ENCODE measurements at regions of chr12 and their contacts with region 1.

Region 1: DNA sequence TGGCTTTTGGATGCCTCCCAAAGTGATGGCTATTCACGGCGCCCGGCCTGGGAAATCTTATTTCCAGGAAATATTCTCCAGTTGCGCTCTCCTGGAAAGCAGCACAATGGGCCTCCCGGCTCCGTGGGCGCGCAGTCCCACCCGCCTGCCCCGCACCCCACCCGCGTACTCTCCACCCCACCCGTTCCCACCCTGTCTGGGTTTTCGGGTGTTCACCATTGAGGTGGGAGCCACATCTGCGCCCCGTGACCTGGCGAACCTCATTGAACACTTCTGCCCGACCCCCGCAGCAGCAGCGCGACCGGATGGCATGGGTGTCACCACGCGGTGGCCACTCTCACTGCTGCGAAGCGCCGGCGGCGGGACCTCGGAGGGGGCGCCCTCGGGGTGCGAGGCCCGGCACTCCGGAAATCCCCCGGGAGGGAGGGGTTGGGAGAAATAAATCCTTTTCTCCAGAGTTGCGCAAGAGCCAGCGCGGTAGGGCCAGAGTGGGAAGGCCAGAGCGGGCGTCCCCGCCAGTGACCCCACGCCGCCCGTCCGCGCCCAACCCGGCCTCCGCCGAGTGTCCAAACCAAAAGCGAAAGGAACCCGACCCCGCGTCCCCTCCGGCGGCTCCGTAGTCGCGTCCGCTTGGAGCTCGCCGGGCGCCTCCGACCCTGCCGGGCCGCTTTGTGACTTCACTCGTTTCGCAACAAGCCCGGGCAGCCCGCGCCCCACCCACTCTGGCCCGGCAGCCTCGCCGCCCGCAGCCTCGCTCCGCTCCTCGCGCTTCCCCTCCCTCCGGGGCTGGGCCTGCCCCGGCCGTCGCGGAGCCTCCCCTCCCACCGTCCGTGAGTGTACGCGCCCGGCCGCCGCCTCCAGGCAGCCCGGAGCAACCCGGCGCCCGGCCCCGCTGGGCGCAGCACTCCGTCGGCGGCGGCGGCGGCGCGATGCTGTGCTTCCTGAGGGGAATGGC is at the start of gene DRAM1:
- DNase-seq: no peak
- ATAC-seq: peak; percentile 87
- H3K4me3 ChIP-seq: peak within 1 kb of the TSS; percentile 89
- H3K27ac ChIP-seq: peak within 1 kb of the TSS; percentile 97
- H3K4me1 ChIP-seq: peaks cover 5% of the 10 kb centered on the region
- H3K27me3 ChIP-seq: no peaks in the 10 kb centered on the region
- CTCF ChIP-seq: peak; percentile 10 to 40 (median 36); a peak in 3 of 6 replicates
- EP300 ChIP-seq: no peak
- POLR2A ChIP-seq: peak; percentile 89
- RAD21 ChIP-seq: peak; percentile 43; the same call in 1 of the 2 replicates
- polyA plus RNA-seq, gene DRAM1: 22.4 to 34.8 TPM

Region 2: GRCh38 chr12:101857043-101857558 is 20.0 kb before region 1 on chr12:
- CTCF ChIA-PET with region 1: interaction called, 3 read pairs
- POLR2A ChIA-PET with region 1: interaction called, 7 read pairs
- RAD21 ChIA-PET with region 1: interaction called, 9 read pairs
- SMC1A ChIA-PET with region 1: interaction called, 11 read pairs
- in situ Hi-C with region 1: no loop called
- intact Hi-C with region 1: loop called (anchors 1 kb)
- DNase-seq: no peak
- ATAC-seq: peak; percentile 49
- H3K4me3 ChIP-seq: no peak overlapping the region
- H3K27ac ChIP-seq: peak overlapping the region; percentile 75
- H3K4me1 ChIP-seq: peaks cover 64% of the 10 kb centered on the region
- H3K27me3 ChIP-seq: no peaks in the 10 kb centered on the region
- CTCF ChIP-seq: no peak
- EP300 ChIP-seq: peak; percentile 40 to 64; a peak in 3 of 4 replicates
- POLR2A ChIP-seq: no peak
- RAD21 ChIP-seq: no peak

Region 3: GRCh38 chr12:101863981-101864380 is 13.2 kb before region 1 on chr12:
- CTCF ChIA-PET with region 1: interaction called, 6 read pairs
- POLR2A ChIA-PET with region 1: interaction called, 9 read pairs
- RAD21 ChIA-PET with region 1: interaction called, 8 read pairs
- SMC1A ChIA-PET with region 1: interaction called, 11 read pairs
- in situ Hi-C with region 1: no loop called
- intact Hi-C with region 1: loop called (anchors 1 kb)
- DNase-seq: no peak
- ATAC-seq: no peak
- H3K4me3 ChIP-seq: no peak overlapping the region
- H3K27ac ChIP-seq: no peak overlapping the region
- H3K4me1 ChIP-seq: peaks cover 13% of the 10 kb centered on the region
- H3K27me3 ChIP-seq: no peaks in the 10 kb centered on the region
- CTCF ChIP-seq: no peak
- EP300 ChIP-seq: no peak
- POLR2A ChIP-seq: no peak
- RAD21 ChIP-seq: no peak

Region 4: GRCh38 chr12:101891462-101892273 is 14.5 kb after region 1 on chr12:
- CTCF ChIA-PET with region 1: interaction called, 11 read pairs
- POLR2A ChIA-PET with region 1: interaction called, 15 read pairs
- RAD21 ChIA-PET with region 1: interaction called, 4 read pairs
- SMC1A ChIA-PET with region 1: interaction called, 16 read pairs
- in situ Hi-C with region 1: no loop called
- intact Hi-C with region 1: no loop called
- DNase-seq: peak; percentile 75
- ATAC-seq: peak; percentile 92
- H3K4me3 ChIP-seq: 0 out of 2 replicates have a peak overlapping the region, but pooled peaks have one; percentile 25
- H3K27ac ChIP-seq: peak overlapping the region; percentile 41
- H3K4me1 ChIP-seq: peaks cover 11% of the 10 kb centered on the region
- H3K27me3 ChIP-seq: no peaks in the 10 kb centered on the region
- CTCF ChIP-seq: no peak
- EP300 ChIP-seq: no peak
- POLR2A ChIP-seq: peak; percentile 40; the same call in 1 of the 2 replicates
- RAD21 ChIP-seq: no peak

Region 5: GRCh38 chr12:101909646-101910045 is 32.5 kb after region 1 on chr12:
- CTCF ChIA-PET with region 1: interaction called, 3 read pairs
- POLR2A ChIA-PET with region 1: interaction called, 3 read pairs
- RAD21 ChIA-PET with region 1: interaction called, 7 read pairs
- SMC1A ChIA-PET with region 1: interaction called, 10 read pairs
- in situ Hi-C with region 1: no loop called
- intact Hi-C with region 1: no loop called
- DNase-seq: no peak
- ATAC-seq: peak; percentile 82
- H3K4me3 ChIP-seq: peak overlapping the region; percentile 43; the same call in 1 of the 2 replicates
- H3K27ac ChIP-seq: peak overlapping the region; percentile 88
- H3K4me1 ChIP-seq: peaks cover 31% of the 10 kb centered on the region
- H3K27me3 ChIP-seq: no peaks in the 10 kb centered on the region
- CTCF ChIP-seq: no peak
- EP300 ChIP-seq: peak in 1 of 2 experiments; percentile 22; a peak in 1 of 4 replicates
- POLR2A ChIP-seq: no peak
- RAD21 ChIP-seq: no peak

Region 6: DNA sequence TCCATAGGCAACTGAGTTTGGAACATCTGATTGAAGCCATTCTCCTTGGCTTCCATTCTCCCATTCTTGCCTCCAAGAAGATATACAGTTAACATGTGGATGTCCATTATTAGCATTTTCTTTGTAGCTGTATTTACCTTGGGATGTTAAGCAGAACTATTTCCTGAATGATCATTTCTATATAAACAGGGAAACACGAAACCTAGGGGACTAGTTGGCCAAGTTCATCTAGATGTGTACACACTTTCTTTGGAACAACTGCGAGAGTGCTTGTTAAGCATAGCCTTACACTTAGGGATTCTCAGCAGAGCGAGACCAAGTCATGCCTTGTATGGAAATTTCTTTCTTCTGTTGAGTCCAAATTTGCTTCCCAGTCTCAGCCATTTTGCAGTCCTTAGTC is 42.3 kb after region 1 on chr12:
- CTCF ChIA-PET with region 1: interaction called, 3 read pairs
- POLR2A ChIA-PET with region 1: interaction called, 3 read pairs
- RAD21 ChIA-PET with region 1: interaction called, 7 read pairs
- SMC1A ChIA-PET with region 1: interaction called, 3 read pairs
- in situ Hi-C with region 1: no loop called
- intact Hi-C with region 1: loop called (anchors 5 kb)
- DNase-seq: no peak
- ATAC-seq: no peak
- H3K4me3 ChIP-seq: no peak overlapping the region
- H3K27ac ChIP-seq: no peak overlapping the region
- H3K4me1 ChIP-seq: peaks cover 26% of the 10 kb centered on the region
- H3K27me3 ChIP-seq: no peaks in the 10 kb centered on the region
- CTCF ChIP-seq: no peak
- EP300 ChIP-seq: no peak
- POLR2A ChIP-seq: no peak
- RAD21 ChIP-seq: no peak